ENCODE measurements at regions of chr2 and their contacts with region 1.

Region 1: DNA sequence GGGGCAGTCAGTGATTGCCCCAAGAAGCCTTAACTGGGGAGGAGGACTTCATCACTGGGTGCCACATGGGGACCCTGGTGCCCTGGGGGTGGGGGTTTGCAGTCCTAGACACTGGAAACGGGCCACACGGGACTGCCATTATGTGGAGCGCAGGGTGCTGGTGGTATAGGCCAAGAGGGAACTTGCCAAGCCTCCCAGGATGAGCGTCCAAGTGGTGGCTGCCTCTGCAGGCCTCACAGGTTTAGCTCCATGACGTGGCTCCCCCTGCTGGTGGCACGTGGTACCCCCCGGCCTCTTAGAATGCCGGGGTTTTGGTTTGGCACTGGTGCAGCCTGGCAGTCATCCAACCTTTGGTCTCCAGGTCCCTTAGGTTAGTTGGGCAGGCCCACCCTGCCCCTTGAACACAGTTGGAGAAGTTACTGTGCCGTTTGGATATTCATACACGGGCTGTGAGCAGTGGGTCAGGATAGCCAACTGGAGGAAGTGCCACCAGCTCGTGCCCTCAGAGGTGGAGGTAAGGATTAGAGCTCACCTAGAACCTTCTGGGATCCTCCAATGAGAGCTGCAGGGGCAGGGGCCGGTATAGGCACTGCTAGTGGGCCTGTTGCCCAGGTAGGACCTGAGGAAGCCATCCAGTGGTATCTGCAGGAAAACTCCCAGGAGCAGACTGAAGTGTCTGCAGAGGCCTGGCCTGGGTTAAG is 5.6 kb downstream of the PTMA start:
- DNase-seq: peak; percentile 92
- ATAC-seq: peak; percentile 57
- H3K4me3 ChIP-seq: no peak overlapping the region
- H3K27ac ChIP-seq: peak overlapping the region; percentile 68
- H3K4me1 ChIP-seq: peaks cover 27 to 70% of the 10 kb centered on the region in 2 experiments
- H3K27me3 ChIP-seq: no peaks in the 10 kb centered on the region
- CTCF ChIP-seq: peak in 2 of 3 experiments; percentile 88 to 91; a peak in 4 of 6 replicates
- POLR2A ChIP-seq: no peak
- RAD21 ChIP-seq: no peak

Region 2: DNA sequence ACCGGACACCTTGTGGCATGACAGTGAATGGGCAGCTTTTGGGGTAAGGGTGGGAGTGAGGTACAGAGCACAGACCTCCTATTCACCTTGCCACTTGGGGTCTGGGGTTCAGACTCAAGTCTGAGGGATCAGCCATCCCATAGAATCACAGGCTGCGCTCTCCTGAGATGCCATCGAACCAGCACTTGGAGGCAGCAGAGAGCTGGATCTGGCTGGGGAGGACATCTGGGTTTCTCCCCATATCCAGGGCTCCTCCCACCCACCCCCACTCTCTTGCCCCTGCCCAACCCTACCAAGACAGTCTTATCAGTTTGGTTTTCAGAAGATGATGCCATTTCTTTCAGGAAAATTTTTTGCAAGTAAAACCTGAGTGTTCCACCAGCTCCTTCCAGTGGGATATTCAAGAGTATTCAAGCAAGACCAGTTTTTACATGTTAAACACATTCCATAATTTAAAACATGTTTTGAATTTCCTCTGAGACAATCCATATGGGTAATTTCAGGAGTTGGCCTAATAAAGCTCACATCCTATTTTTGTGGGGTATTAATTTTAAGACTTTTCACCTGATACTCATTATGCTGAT is 150.4 kb before region 1 on chr2:
- CTCF ChIA-PET with region 1: interaction called, 7 read pairs
- POLR2A ChIA-PET with region 1: no interaction called
- RAD21 ChIA-PET with region 1: no interaction called
- intact Hi-C with region 1: loop called (anchors 2 kb)
- DNase-seq: peak; percentile 65
- ATAC-seq: peak; percentile 99
- H3K4me3 ChIP-seq: no peak overlapping the region
- H3K27ac ChIP-seq: no peak overlapping the region
- H3K4me1 ChIP-seq: no peaks in the 10 kb centered on the region
- H3K27me3 ChIP-seq: no peaks in the 10 kb centered on the region
- CTCF ChIP-seq: peak; percentile 65 to 77 (median 67)
- POLR2A ChIP-seq: no peak
- RAD21 ChIP-seq: peak; percentile 83

Region 3: GRCh38 chr2:231648587-231649174 is 65.2 kb before region 1 on chr2:
- CTCF ChIA-PET with region 1: interaction called, 7 read pairs
- POLR2A ChIA-PET with region 1: interaction called, 4 read pairs
- RAD21 ChIA-PET with region 1: no interaction called
- intact Hi-C with region 1: loop called (anchors 1 kb)
- DNase-seq: peak; percentile 78
- ATAC-seq: peak; percentile 98
- H3K4me3 ChIP-seq: no peak overlapping the region
- H3K27ac ChIP-seq: no peak overlapping the region
- H3K4me1 ChIP-seq: peaks cover 26 to 54% of the 10 kb centered on the region in 2 experiments
- H3K27me3 ChIP-seq: no peaks in the 10 kb centered on the region
- CTCF ChIP-seq: peak in 2 of 3 experiments; percentile 89; a peak in 4 of 6 replicates
- POLR2A ChIP-seq: no peak
- RAD21 ChIP-seq: no peak

Region 4: GRCh38 chr2:231680992-231681853 is 32.7 kb before region 1 on chr2:
- CTCF ChIA-PET with region 1: interaction called, 185 read pairs
- POLR2A ChIA-PET with region 1: interaction called, 22 read pairs
- RAD21 ChIA-PET with region 1: interaction called, 20 to 31 read pairs
- intact Hi-C with region 1: loop called (anchors 1 kb)
- DNase-seq: no peak
- ATAC-seq: peak; percentile 75
- H3K4me3 ChIP-seq: peak overlapping the region; percentile 61 to 70
- H3K27ac ChIP-seq: peak overlapping the region; percentile 100
- H3K4me1 ChIP-seq: peaks cover 31 to 69% of the 10 kb centered on the region in 2 experiments
- H3K27me3 ChIP-seq: no peaks in the 10 kb centered on the region
- CTCF ChIP-seq: no peak
- POLR2A ChIP-seq: peak; percentile 67
- RAD21 ChIP-seq: no peak

Region 5: DNA sequence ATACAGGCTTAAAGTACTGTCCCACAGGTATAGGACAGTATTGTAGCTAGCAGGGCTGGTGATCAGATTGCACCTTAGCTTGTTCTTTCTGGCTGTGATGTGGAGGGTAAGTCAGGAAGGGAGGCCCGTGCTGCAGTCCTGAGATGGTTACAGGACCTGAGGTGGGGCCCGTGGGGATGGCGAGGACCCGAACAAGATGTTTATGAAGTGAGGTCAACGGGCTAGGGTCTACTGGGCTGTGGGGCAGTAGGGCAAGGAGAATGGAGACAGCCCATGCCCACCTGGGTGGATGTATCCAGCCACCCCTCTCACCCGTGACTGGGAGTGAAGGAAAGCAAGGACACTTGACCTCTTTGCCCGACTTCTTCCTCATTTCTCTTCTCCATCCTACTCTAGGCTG is 12.3 kb after region 1 on chr2:
- CTCF ChIA-PET with region 1: interaction called, 28 read pairs
- POLR2A ChIA-PET with region 1: interaction called, 4 read pairs
- RAD21 ChIA-PET with region 1: no interaction called
- intact Hi-C with region 1: no loop called
- DNase-seq: no peak
- ATAC-seq: no peak
- H3K4me3 ChIP-seq: no peak overlapping the region
- H3K27ac ChIP-seq: no peak overlapping the region
- H3K4me1 ChIP-seq: peaks cover 0 to 6% of the 10 kb centered on the region in 2 experiments; a peak in 1 of 4 replicates
- H3K27me3 ChIP-seq: no peaks in the 10 kb centered on the region
- CTCF ChIP-seq: no peak
- POLR2A ChIP-seq: no peak
- RAD21 ChIP-seq: no peak

Region 6: GRCh38 chr2:232652505-232652851 is 938.6 kb after region 1 on chr2:
- CTCF ChIA-PET with region 1: no interaction called
- POLR2A ChIA-PET with region 1: no interaction called
- RAD21 ChIA-PET with region 1: no interaction called
- intact Hi-C with region 1: no loop called
- DNase-seq: no peak
- ATAC-seq: no peak
- H3K4me3 ChIP-seq: no peak overlapping the region
- H3K27ac ChIP-seq: no peak overlapping the region
- H3K4me1 ChIP-seq: no peaks in the 10 kb centered on the region
- H3K27me3 ChIP-seq: no peaks in the 10 kb centered on the region
- CTCF ChIP-seq: no peak
- POLR2A ChIP-seq: no peak
- RAD21 ChIP-seq: no peak